Left lung (tissue), 14 donors: ENCODE measurements at regions of chr1 and their contacts with region 1.

Region 1: DNA sequence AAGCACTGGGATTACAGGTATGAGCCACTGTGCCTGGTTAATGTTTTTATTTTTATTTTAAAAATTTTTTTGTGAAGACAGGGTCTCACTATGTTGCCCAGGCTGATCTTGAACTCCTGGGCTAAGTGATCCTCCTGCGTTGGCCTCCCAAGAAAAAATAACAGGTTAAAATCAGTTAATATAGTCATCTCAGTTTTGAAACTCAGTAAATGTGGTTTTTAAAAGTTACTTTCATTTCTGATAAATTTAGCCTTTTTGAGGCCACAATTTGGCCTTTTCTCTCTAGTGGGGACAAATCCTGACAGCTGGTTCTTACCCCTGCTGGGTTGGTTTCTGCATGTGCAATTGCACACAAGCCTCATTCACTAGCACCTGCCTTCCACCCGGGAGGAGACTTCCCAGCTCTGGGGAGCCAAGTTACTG is 13.3 kb downstream of the PMF1 start:
- DNase-seq: no peak
- ATAC-seq: no peak
- H3K4me3 ChIP-seq: no peak overlapping the region
- H3K27ac ChIP-seq: no peak overlapping the region
- H3K4me1 ChIP-seq: peaks cover 0 to 10% of the 10 kb centered on the region in 2 donors
- H3K27me3 ChIP-seq: no peaks in the 10 kb centered on the region
- CTCF ChIP-seq: no peak

Region 2: DNA sequence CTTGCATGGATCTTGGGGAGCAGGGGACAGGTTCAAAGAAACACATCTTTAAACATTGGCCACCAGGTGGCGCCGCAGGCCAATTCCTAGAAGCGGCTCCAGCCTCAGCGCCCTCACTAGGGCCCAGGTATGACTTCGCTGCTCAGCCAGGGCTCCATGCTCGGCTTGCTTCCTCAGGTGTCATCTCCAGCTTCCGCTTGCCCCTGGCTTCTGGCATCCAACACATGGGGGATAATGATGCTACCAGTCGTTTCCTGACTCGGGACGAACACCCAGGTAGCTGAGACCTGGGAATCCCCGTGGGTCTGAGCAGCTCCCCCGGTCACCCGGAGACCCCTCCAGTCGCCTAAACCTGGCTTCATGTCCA is 135.3 kb before region 1 on chr1:
- intact Hi-C with region 1: loop called in 1 of 2 experiments (anchors 5 kb)
- DNase-seq: peak in 3 of 4 donors; percentile 87 to 96 (median 87)
- ATAC-seq: peak; percentile 88
- H3K4me3 ChIP-seq: no peak overlapping the region
- H3K27ac ChIP-seq: peak overlapping the region in 1 of 2 donors; percentile 45
- H3K4me1 ChIP-seq: peaks cover 3 to 18% of the 10 kb centered on the region in 2 donors
- H3K27me3 ChIP-seq: peaks cover 0 to 23% of the 10 kb centered on the region in 2 donors
- CTCF ChIP-seq: peak; percentile 79 to 84

Region 3: DNA sequence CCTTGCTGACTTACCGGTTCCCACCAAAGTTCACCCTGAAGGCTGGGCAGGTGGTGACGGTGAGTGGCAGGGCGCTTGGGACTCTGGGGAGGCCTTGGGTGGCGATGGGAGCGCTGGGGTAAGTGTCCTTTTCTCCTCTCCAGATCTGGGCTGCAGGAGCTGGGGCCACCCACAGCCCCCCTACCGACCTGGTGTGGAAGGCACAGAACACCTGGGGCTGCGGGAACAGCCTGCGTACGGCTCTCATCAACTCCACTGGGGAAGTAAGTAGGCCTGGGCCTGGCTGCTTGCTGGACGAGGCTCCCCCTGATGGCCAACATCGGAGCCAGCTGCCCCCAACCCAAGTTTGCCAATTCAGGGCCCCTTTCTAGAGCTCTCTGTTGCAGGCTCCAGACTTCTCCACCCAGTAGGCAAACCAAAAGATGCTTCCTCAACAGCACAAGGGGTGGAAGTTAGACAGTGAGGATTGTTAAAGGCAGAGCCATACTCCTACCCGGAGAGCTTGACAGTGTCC is 89.1 kb before region 1 on chr1:
- intact Hi-C with region 1: loop called in 1 of 2 experiments (anchors 5 kb)
- DNase-seq: no peak
- ATAC-seq: no peak
- H3K4me3 ChIP-seq: no peak overlapping the region
- H3K27ac ChIP-seq: no peak overlapping the region
- H3K4me1 ChIP-seq: no peaks in the 10 kb centered on the region
- H3K27me3 ChIP-seq: no peaks in the 10 kb centered on the region
- CTCF ChIP-seq: no peak

Region 4: DNA sequence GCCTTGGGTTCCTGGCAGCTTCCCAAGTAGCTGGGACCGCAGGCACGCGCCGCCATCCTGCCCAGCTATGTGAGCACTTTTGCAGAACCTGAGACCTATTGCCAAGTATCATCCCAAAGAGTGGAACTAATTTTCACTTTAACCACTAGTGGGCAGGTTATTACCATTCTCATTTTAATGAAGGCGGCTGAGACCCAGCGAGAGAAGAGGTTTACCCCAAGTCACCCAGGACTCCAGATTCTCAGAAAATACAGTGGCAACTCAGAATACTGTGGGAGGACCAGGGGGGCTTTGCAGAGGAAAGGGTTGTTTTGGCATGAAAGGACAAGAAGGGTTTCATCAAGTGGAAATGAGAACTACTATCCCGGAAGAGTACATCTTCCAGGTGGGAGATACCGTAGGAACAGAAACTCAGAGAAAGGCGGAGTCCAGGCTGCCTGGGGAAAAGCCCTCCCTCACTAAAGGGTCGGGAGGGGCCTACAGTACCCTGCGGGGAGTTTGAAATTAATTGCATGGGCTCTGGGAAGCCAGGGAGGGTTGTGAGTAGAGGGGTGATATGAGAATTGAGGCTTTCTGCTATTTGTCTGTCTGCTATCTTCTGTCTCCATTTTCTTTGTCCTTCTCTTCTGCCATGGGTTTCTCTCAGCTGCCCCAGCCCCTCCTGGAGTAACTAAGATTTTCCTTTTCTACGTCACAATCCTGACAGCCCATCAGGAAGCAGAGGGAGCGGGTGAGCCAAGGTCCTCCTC is 79.9 kb before region 1 on chr1:
- intact Hi-C with region 1: loop called in 1 of 2 experiments (anchors 5 kb)
- DNase-seq: peak; percentile 63 to 88 (median 79)
- ATAC-seq: peak; percentile 80
- H3K4me3 ChIP-seq: no peak overlapping the region
- H3K27ac ChIP-seq: peak overlapping the region in 1 of 2 donors; percentile 91
- H3K4me1 ChIP-seq: peaks cover 10 to 53% of the 10 kb centered on the region in 2 donors
- H3K27me3 ChIP-seq: peaks cover 0 to 11% of the 10 kb centered on the region in 2 donors
- CTCF ChIP-seq: peak; percentile 42 to 72

Region 5: DNA sequence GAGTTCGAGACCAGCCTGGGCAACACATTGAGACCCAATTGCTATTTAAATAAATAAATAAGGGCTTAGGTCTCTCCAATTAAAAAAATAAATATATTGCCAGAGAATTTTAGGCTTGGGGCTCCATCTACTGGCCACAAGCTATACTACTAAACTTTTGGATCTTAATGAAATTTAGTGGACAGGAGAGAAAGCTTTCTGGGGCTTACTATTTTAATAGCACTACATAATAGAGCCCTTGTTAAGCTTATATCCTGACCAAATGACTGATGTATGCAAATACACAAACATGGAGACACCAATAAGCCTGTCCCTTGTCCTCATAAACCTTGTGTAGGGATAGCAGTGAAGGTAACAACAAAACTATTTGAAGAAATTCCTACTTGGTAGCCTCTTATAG is 93.5 kb after region 1 on chr1:
- intact Hi-C with region 1: no loop called
- DNase-seq: peak in 1 of 4 donors; percentile 16
- ATAC-seq: peak; percentile 21
- H3K4me3 ChIP-seq: no peak overlapping the region
- H3K27ac ChIP-seq: no peak overlapping the region
- H3K4me1 ChIP-seq: no peaks in the 10 kb centered on the region
- H3K27me3 ChIP-seq: no peaks in the 10 kb centered on the region
- CTCF ChIP-seq: peak; percentile 27 to 34